K562 (cell line): ENCODE measurements at regions of chr2 and their contacts with region 1.

Region 1: GRCh38 chr2:38734299-38735058 is 16.7 kb downstream of the SRSF7 start:
- DNase-seq: no peak
- ATAC-seq: peak; percentile 35; the same call in 2 of the 3 replicates
- H3K4me3 ChIP-seq: no peak overlapping the region
- H3K27ac ChIP-seq: no peak overlapping the region
- H3K4me1 ChIP-seq: no peaks in the 10 kb centered on the region
- H3K27me3 ChIP-seq: no peaks in the 10 kb centered on the region
- CTCF ChIP-seq: no peak
- EP300 ChIP-seq: no peak
- POLR2A ChIP-seq: no peak
- RAD21 ChIP-seq: no peak

Region 2: DNA sequence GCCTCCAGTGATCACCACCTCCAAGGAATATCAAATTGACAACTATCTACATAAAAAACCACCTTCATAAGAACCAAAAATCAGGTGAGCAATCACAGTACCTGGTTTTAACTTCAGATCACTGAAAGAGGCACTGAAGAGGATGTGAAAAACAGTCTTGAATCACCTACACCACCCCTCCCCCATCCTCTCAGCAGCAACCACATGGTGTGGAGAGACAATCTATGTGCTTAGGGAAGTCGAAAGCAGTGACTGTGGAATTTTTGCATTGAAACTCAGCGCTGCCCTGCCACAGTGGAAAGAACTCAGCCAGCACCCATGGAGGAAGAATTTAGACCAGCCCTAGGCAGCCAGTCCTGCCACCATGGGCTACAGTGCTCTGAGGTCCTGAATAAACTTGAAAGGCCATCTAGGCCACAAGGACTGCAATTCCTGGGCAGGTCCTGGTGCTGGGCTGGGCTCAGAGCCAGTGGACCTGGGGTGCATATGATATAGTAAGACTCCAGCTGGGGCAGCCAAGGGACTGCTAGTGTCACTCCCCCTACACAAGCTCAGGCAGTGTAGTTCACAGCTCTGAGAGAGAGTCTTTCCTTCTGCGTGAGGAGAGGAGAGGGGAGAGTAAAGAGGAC is 433.0 kb before region 1 on chr2:
- CTCF ChIA-PET with region 1: no interaction called
- POLR2A ChIA-PET with region 1: no interaction called
- in situ Hi-C with region 1: loop called (anchors 10 kb)
- intact Hi-C with region 1: no loop called
- DNase-seq: no peak
- ATAC-seq: peak; percentile 66
- H3K4me3 ChIP-seq: no peak overlapping the region
- H3K27ac ChIP-seq: peak overlapping the region; percentile 28; the same call in 2 of the 3 replicates
- H3K4me1 ChIP-seq: peaks cover 0 to 3% of the 10 kb centered on the region in 2 experiments; a peak in 3 of 5 replicates
- H3K27me3 ChIP-seq: no peaks in the 10 kb centered on the region
- CTCF ChIP-seq: no peak
- EP300 ChIP-seq: no peak
- POLR2A ChIP-seq: no peak
- RAD21 ChIP-seq: no peak

Region 3: DNA sequence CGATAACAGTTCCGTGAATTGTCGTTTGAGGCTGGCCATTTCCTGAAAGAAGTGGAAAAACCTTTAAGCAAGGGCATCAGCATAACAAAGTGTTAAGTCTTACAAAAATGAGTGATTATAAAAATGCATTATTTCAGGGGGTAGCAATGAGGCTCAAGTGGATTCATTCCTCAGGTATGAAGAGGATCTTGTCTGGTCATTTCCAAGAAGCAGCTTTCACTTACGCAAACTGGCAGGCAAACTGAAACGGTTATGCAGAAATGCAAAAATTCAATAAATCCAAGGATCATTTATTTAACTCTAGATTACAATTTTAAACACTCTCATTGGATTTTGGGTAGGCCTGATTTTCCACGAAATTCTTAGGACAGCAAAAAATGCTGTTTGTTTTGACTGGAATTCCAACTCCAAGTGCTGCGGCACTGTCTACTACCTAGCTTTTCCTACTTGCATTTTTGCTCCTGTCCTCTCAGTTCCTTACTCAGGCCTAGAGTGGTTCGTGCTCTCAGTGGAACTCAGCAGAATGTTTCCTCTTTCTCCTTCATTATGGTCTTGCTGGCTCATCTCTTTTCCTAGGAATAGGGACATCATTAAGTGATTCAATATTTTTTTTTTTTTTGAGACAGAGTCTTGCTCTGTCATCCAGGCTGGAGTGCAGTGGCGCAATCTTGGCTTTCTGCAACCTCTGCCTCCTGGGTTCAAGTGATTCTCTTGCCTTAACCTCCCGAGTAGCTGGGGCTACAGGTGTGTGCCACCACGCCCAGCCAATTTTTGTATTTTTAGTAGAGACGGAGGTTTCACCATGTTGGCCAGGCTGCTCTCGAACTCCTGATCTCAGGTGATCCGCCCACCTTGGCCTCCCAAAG is 81.4 kb after region 1 on chr2:
- CTCF ChIA-PET with region 1: no interaction called
- POLR2A ChIA-PET with region 1: no interaction called
- in situ Hi-C with region 1: no loop called
- intact Hi-C with region 1: no loop called
- DNase-seq: no peak
- ATAC-seq: no peak
- H3K4me3 ChIP-seq: no peak overlapping the region
- H3K27ac ChIP-seq: no peak overlapping the region
- H3K4me1 ChIP-seq: no peaks in the 10 kb centered on the region
- H3K27me3 ChIP-seq: no peaks in the 10 kb centered on the region
- CTCF ChIP-seq: no peak
- EP300 ChIP-seq: no peak
- POLR2A ChIP-seq: no peak
- RAD21 ChIP-seq: no peak